GM12878 (cell line): ENCODE measurements at regions of chr2 and their contacts with region 1.

Region 1: GRCh38 chr2:68441179-68441993 is 25.7 kb downstream of the FBXO48 start:
- DNase-seq: peak; percentile 97
- ATAC-seq: peak; percentile 96
- H3K4me3 ChIP-seq: peak overlapping the region; percentile 40; the same call in 1 of the 2 replicates
- H3K27ac ChIP-seq: peak overlapping the region; percentile 92
- H3K4me1 ChIP-seq: peaks cover 33% of the 10 kb centered on the region
- H3K27me3 ChIP-seq: no peaks in the 10 kb centered on the region
- CTCF ChIP-seq: peak; percentile 76 to 93 (median 89)
- EP300 ChIP-seq: peak; percentile 75 to 86; a peak in 3 of 4 replicates
- POLR2A ChIP-seq: no peak
- RAD21 ChIP-seq: peak; percentile 100

Region 2: DNA sequence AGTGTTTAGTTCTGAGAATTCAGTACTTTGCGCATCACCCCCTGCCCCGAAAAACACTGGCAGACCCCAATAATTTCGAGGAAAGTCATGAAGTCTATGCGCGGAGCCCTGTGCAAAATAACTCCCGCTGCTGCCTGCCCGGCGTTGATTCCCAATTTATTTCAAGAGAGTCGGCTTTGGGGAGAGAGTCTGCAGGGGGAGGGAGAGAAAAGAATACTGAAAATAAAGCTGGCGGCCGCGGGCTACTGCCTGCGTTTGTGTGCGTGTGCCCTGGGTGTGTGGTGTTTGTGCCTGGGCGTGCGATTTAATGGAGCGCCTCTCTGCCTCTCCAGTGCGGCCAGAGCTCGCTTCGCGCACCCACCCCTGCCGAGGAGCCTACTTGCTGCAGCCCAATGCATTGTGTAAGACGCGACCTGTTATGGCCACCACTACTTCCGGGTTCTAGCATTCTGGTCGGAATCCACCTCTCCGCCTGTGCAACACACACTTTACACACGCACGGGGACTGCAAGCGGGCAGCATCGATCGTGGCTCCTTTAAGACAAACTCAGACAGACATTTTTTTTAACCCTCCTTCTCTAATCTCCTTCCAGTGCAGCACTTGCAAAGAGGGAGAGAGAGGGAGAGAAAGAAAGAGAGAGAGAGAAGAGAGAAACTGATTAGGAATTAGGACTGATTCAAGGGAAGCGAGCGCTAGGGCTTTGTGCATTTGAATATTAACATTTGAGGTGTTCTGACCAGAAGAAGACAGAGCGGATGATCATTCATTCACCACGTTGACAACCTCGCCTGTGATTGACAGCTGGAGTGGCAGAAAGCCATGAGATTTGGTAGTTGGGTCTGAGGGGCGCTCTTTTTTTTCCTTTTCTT is 2006.5 kb before region 1 on chr2 and contains the start of gene MEIS1:
- CTCF ChIA-PET with region 1: no interaction called
- POLR2A ChIA-PET with region 1: no interaction called
- RAD21 ChIA-PET with region 1: no interaction called
- SMC1A ChIA-PET with region 1: no interaction called
- in situ Hi-C with region 1: loop called (anchors 25 kb)
- intact Hi-C with region 1: no loop called
- DNase-seq: no peak
- ATAC-seq: peak; percentile 95
- H3K4me3 ChIP-seq: peak within 1 kb of the TSS; percentile 57; the same call in 1 of the 2 replicates
- H3K27ac ChIP-seq: no peak within 1 kb of the TSS
- H3K4me1 ChIP-seq: no peaks in the 10 kb centered on the region
- H3K27me3 ChIP-seq: peaks cover 9 to 34% of the 10 kb centered on the region in 2 experiments
- CTCF ChIP-seq: no peak
- EP300 ChIP-seq: no peak
- POLR2A ChIP-seq: no peak
- RAD21 ChIP-seq: no peak
- polyA plus RNA-seq, gene MEIS1: 0.04 TPM in 1 of 2 experiments, not detected in the other

Region 3: DNA sequence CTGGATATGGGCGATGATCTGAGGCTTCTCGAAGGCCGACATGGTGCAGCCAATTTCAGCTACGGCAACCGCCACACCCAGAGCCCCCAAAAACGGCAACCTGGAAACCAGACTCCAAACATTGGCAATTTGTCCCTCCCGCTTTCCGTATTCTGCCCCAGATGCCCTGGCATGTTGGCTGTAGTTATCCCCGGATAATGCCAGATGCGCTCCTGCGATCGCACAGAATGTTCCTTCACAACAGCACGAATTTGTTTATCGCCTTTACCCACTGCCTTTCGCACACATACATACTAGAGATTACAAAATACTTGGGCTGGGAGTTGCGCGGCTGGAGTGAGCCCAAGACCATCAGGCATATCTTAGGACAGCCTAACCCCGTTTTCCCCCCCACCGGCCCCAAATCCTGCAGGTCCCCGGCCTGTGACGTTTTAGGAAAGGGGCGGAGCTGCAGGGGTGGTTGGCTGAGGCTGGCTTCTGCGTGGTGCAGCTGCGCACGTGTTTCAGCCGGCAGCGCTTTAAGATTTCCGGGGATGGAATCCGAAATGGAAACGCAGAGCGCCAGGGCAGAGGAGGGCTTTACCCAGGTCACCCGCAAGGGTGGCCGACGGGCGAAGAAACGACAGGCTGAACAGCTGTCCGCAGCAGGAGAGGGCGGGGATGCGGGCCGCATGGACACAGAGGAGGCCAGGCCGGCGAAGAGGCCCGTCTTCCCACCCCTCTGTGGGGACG is 283.8 kb before region 1 on chr2 and contains the start of gene PNO1:
- CTCF ChIA-PET with region 1: interaction called, 5 read pairs
- POLR2A ChIA-PET with region 1: no interaction called
- RAD21 ChIA-PET with region 1: interaction called, 13 read pairs
- SMC1A ChIA-PET with region 1: interaction called, 4 read pairs
- in situ Hi-C with region 1: no loop called
- intact Hi-C with region 1: no loop called
- DNase-seq: peak; percentile 86
- ATAC-seq: peak; percentile 96
- H3K4me3 ChIP-seq: peak within 1 kb of the TSS; percentile 98
- H3K27ac ChIP-seq: peak within 1 kb of the TSS; percentile 97
- H3K4me1 ChIP-seq: peaks cover 10% of the 10 kb centered on the region
- H3K27me3 ChIP-seq: no peaks in the 10 kb centered on the region
- CTCF ChIP-seq: no peak
- EP300 ChIP-seq: no peak; a peak in 1 of 4 replicates
- POLR2A ChIP-seq: peak; percentile 81
- RAD21 ChIP-seq: no peak
- polyA plus RNA-seq, gene PNO1: 9.7 to 18.5 TPM

Region 4: DNA sequence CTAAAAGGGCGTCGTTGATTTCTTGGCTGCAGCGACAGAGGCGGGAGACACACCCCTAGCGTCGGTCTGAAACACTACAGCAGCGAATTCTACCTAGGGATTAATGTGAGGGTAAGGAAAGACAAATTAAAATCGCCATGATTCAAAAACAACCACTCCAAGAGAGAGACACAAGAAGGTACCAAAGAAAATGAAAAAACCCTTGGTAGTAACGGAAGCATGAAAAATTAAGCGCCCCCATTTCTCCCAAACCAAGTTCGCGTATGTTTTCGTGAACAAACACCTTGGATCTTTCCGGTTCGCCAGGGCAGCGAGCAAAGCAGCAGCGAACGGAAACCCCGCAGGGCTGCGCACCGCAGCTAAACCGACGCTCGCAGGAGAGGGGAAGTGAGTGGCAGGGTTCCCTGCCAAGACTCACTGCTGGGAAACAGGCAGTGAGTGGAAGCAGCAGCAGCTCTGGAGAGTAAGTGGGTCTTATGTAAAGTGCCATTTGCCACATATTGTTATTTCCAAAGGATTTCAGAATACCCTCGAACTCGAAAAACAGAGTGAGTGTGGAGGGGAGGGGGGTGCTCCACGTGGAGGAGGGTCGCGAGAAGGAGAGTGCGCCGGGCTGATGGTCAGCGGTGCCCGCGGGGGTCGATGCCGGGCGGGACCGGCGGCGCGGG is 190.1 kb before region 1 on chr2:
- CTCF ChIA-PET with region 1: interaction called, 13 read pairs
- POLR2A ChIA-PET with region 1: interaction called, 3 read pairs
- RAD21 ChIA-PET with region 1: interaction called, 15 read pairs
- SMC1A ChIA-PET with region 1: interaction called, 9 read pairs
- in situ Hi-C with region 1: no loop called
- intact Hi-C with region 1: loop called (anchors 5 kb)
- DNase-seq: peak; percentile 64
- ATAC-seq: peak; percentile 70
- H3K4me3 ChIP-seq: peak overlapping the region; percentile 85
- H3K27ac ChIP-seq: peak overlapping the region; percentile 91
- H3K4me1 ChIP-seq: peaks cover 18% of the 10 kb centered on the region
- H3K27me3 ChIP-seq: no peaks in the 10 kb centered on the region
- CTCF ChIP-seq: peak; percentile 70 to 79 (median 76)
- EP300 ChIP-seq: no peak
- POLR2A ChIP-seq: no peak; the same call in 1 of the 2 replicates
- RAD21 ChIP-seq: peak; percentile 71

Region 5: DNA sequence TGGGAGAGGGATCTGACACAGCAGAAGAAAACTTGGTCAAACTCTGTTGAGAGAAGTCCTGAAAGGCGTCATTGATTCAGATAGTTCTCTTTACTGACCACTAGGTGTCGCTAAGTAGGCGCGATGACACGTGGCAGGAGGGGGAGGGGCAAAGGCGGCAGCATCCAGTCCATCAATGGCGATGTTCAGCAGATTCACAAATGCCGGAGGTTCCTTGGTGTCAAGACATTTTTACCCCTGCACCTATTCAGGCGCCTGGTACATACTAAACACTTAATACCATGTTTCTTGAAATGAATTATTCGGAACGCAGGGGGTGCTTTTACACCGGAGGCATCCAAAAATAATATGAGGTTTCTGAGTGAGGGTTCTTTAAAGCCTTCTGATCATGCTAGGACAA is 79.3 kb before region 1 on chr2:
- CTCF ChIA-PET with region 1: interaction called, 56 read pairs
- POLR2A ChIA-PET with region 1: interaction called, 47 read pairs
- RAD21 ChIA-PET with region 1: interaction called, 83 read pairs
- SMC1A ChIA-PET with region 1: interaction called, 166 read pairs
- in situ Hi-C with region 1: loop called (anchors 5 kb)
- intact Hi-C with region 1: loop called (anchors 1 kb)
- DNase-seq: peak; percentile 78
- ATAC-seq: peak; percentile 54
- H3K4me3 ChIP-seq: peak overlapping the region; percentile 33; the same call in 1 of the 2 replicates
- H3K27ac ChIP-seq: peak overlapping the region; percentile 94
- H3K4me1 ChIP-seq: peaks cover 21% of the 10 kb centered on the region
- H3K27me3 ChIP-seq: no peaks in the 10 kb centered on the region
- CTCF ChIP-seq: peak; percentile 75 to 92 (median 81)
- EP300 ChIP-seq: peak; percentile 34 to 68; a peak in 1 of 4 replicates
- POLR2A ChIP-seq: peak; percentile 68
- RAD21 ChIP-seq: peak; percentile 97

Region 6: DNA sequence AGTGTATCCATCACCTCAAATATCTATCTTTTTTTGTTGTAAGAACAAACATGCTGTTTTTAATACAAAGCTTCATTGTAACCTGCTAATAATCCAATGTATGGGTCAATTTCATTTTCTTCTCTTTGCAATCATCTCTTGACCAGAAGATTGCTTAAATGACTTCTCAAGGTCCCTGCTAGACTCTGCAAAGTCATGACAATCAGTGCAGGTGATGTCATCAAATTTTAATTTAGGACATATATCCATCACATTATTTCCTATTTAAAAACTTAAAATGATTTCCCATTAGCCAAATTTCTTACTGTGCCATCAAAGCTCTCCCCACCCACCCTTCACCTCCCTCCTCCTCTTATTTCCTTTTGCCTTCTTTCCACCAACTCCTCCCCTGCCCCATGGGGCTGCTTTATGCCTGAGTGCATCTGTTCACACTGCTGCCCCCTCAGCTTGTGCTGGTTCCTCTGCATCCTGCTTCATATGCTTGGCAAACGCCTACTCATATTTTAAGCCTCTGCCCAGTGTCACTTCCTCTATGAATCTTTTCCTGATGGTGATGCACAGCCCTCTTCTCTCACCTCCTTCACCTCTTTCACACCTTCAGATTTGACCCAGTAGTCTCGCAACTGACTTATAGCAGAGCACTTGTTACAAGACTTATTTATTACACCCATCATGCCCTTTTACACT is 56.0 kb before region 1 on chr2:
- CTCF ChIA-PET with region 1: interaction called, 85 read pairs
- POLR2A ChIA-PET with region 1: interaction called, 42 read pairs
- RAD21 ChIA-PET with region 1: interaction called, 211 read pairs
- SMC1A ChIA-PET with region 1: interaction called, 259 read pairs
- in situ Hi-C with region 1: no loop called
- intact Hi-C with region 1: loop called (anchors 1 kb)
- DNase-seq: peak; percentile 95
- ATAC-seq: peak; percentile 74
- H3K4me3 ChIP-seq: no peak overlapping the region
- H3K27ac ChIP-seq: peak overlapping the region; percentile 90
- H3K4me1 ChIP-seq: peaks cover 88% of the 10 kb centered on the region
- H3K27me3 ChIP-seq: no peaks in the 10 kb centered on the region
- CTCF ChIP-seq: peak in 1 of 3 experiments; percentile 11; a peak in 1 of 6 replicates
- EP300 ChIP-seq: peak; percentile 62 to 81; a peak in 2 of 4 replicates
- POLR2A ChIP-seq: peak; percentile 59
- RAD21 ChIP-seq: no peak

Region 7: DNA sequence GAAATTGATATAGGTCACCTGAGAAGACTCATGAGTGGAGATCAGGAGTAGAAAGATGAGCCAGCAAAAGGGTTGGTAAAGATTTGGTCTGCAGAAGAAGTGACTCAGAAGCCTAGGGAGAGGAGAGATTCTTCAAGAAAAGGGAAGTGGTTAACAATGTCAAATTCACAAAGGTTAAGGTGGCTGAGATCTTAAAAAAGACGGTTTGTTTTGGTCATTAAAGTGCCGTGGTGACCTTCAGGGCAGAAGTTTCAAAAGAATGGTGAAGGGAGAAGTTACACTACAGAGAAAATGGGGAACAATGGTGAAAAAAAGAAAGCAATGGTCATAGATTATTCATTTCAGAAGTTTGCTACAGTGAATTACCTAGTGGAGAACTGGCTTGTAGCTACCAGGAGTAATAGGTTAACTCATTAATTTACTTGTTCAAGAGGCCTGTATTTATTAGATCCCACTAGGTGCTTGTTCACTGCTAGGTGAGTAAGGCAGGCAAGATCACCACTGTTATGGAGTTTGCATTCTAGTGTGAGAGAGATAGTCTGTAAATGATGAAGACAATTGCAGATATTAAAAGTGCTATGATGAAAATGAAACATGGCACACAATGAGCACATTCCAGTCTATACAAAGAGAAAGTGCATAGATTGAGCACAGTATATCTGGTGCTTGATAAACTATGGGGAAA is 17.3 kb before region 1 on chr2:
- CTCF ChIA-PET with region 1: interaction called, 91 read pairs
- POLR2A ChIA-PET with region 1: interaction called, 69 read pairs
- RAD21 ChIA-PET with region 1: interaction called, 116 read pairs
- SMC1A ChIA-PET with region 1: interaction called, 200 read pairs
- in situ Hi-C with region 1: no loop called
- intact Hi-C with region 1: loop called (anchors 1 kb)
- DNase-seq: peak; percentile 98
- ATAC-seq: peak; percentile 85
- H3K4me3 ChIP-seq: peak overlapping the region; percentile 18; the same call in 1 of the 2 replicates
- H3K27ac ChIP-seq: peak overlapping the region; percentile 88
- H3K4me1 ChIP-seq: peaks cover 64% of the 10 kb centered on the region
- H3K27me3 ChIP-seq: no peaks in the 10 kb centered on the region
- CTCF ChIP-seq: no peak
- EP300 ChIP-seq: peak; percentile 91 to 92
- POLR2A ChIP-seq: no peak
- RAD21 ChIP-seq: peak; percentile 18; the same call in 1 of the 2 replicates